CD4-positive, alpha-beta memory T cell (primary cell): ENCODE measurements at regions of chr14 and their contacts with region 1.

Region 1: GRCh38 chr14:61719344-61720293 is 24.3 kb downstream of the HIF1A start:
- DNase-seq: peak in 3 of 5 donors; percentile 26 to 33 (median 26)
- H3K4me3 ChIP-seq: peak overlapping the region in 1 of 2 donors; percentile 3
- H3K4me3 Mint-ChIP-seq: peak overlapping the region in 6 of 8 donors; percentile 14 to 74 (median 50)
- H3K27ac ChIP-seq: peak overlapping the region; percentile 7
- H3K27ac Mint-ChIP-seq: peak overlapping the region; percentile 32 to 87 (median 77)
- H3K4me1 ChIP-seq: peaks cover 59% of the 10 kb centered on the region
- H3K4me1 Mint-ChIP-seq: peaks cover 41 to 72% (median 60%) of the 10 kb centered on the region in 4 donors
- H3K27me3 ChIP-seq: no peaks in the 10 kb centered on the region
- H3K27me3 Mint-ChIP-seq: no peaks in the 10 kb centered on the region

Region 2: DNA sequence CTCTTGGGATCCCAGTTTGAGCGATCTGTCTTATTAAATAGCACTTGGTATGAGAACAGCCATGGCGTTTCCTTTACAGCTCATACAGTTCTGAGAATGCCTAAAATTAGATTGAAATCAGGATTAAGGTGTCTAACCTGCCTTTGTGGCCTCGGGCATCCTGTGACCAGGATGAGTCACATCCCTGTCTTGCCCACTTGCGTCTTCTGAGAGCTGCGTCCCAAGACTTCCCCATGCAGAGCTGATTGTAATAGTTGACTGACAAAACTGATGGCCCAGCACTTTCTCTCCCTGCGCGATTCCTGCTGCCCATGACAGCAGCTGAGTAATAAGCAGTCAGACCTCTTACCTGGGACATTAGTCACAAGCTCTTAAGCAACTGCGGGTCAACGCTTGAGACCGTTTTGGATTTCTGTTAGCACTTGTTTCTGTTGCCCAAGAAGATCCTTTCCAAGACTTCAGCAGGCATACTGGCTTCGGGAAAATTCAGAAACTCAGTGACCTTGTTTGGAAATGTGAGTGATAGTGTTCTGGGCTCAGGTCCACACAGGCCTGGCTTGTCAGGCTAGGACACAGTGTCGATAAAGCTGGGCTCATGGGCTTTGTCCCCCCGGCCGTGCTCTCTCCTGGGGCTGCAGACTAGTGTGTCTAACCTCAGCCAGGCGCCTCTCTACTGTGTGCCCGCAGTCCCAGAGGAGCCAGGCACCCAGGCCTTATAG is 194.2 kb before region 1 on chr14:
- CTCF ChIA-PET with region 1: interaction called, 4 read pairs
- POLR2A ChIA-PET with region 1: interaction called, 4 read pairs
- intact Hi-C with region 1: loop called (anchors 5 kb)
- DNase-seq: peak in 3 of 5 donors; percentile 34 to 79 (median 34)
- H3K4me3 ChIP-seq: no peak overlapping the region
- H3K4me3 Mint-ChIP-seq: peak overlapping the region in 7 of 8 donors; percentile 17 to 64 (median 41)
- H3K27ac ChIP-seq: peak overlapping the region; percentile 37
- H3K27ac Mint-ChIP-seq: peak overlapping the region; percentile 88 to 95 (median 91)
- H3K4me1 ChIP-seq: peaks cover 55% of the 10 kb centered on the region
- H3K4me1 Mint-ChIP-seq: peaks cover 59 to 87% (median 72%) of the 10 kb centered on the region in 4 donors
- H3K27me3 ChIP-seq: no peaks in the 10 kb centered on the region
- H3K27me3 Mint-ChIP-seq: no peaks in the 10 kb centered on the region